Ascending aorta (tissue), 2 donors: ENCODE measurements at regions of chr16 and their contacts with region 1.

Region 1: GRCh38 chr16:28924732-28925385 is at the start of gene RABEP2:
- DNase-seq: peak; percentile 45 to 94
- H3K4me3 ChIP-seq: peak within 1 kb of the TSS; percentile 80 to 90
- H3K27ac ChIP-seq: peak within 1 kb of the TSS; percentile 96 to 99
- H3K4me1 ChIP-seq: peaks cover 6 to 9% of the 10 kb centered on the region in 2 donors
- H3K27me3 ChIP-seq: no peaks in the 10 kb centered on the region
- CTCF ChIP-seq: no peak
- total RNA-seq, gene RABEP2: 64.5 TPM

Region 2: DNA sequence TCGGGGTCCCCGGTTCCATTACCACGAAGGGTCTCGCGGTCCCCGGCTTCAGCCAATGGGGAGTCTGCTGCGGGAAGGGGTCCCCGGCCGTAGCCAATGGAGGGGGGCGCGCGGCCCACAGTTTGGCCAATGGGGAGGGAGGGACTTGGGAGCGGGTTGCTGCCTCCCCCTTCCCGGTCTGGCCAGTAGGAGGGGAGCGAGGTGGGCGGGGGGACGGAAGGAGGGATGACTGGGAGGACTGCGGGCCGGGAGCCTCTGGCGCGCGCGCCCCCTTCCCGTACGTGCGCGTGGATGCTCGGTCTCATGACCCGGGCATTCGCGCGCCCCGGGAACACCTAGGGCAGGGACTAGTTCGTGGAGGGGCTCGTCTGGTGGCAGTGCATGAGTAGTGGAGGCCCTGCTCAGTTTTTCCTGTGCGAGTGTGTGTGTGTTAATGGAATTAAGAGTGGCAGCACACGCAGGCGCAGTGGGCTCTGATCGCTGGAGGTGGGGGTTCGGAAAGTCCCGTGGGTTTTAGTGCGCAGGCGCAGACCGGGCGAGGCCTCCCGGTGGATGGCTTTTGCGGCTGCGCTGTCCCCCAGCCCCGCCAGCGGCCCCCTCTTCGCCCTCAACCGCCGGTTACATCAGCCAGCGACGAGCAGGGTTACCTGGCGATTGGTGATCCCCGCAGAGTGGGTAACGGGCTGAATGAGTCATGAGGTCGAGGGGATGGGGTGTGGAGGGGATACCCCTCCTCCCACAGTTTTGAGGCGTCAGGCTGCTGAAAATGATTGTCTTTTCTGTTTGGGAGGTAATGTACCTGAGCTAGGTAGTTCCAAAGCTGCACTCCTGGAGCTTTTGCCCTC is 100.8 kb before region 1 on chr16:
- intact Hi-C with region 1: loop called (anchors 2 kb)
- DNase-seq: peak; percentile 88 to 98
- H3K4me3 ChIP-seq: peak overlapping the region; percentile 98 to 100
- H3K27ac ChIP-seq: peak overlapping the region; percentile 99 to 100
- H3K4me1 ChIP-seq: peaks cover 0 to 20% of the 10 kb centered on the region in 2 donors
- H3K27me3 ChIP-seq: no peaks in the 10 kb centered on the region
- CTCF ChIP-seq: peak in 1 of 3 experiments; percentile 18

Region 3: GRCh38 chr16:28879841-28880588 is 44.8 kb before region 1 on chr16:
- intact Hi-C with region 1: loop called (anchors 2 kb)
- DNase-seq: peak; percentile 52 to 91
- H3K4me3 ChIP-seq: peak overlapping the region; percentile 51 to 79
- H3K27ac ChIP-seq: no peak overlapping the region
- H3K4me1 ChIP-seq: peaks cover 9 to 10% of the 10 kb centered on the region in 2 donors
- H3K27me3 ChIP-seq: no peaks in the 10 kb centered on the region
- CTCF ChIP-seq: no peak

Region 4: DNA sequence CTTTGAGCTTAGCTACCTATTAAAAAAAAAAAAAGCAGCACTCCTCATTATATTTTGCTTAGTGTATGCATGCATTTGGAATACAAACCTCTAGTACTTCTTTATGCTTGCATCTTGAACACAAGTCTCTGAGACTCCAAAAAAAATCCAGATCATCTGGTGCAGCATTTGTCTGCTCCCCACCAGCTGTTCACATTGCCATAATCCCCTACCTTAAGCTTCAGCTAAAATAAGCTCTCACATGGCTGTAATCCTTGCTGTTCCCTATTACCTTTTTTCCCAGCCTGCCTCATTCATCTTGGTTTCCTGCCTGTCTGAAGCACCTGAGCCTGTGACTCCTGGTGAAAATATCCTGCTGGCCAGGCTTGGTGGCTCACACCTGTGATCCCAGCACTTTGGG is 18.4 kb after region 1 on chr16:
- intact Hi-C with region 1: loop called (anchors 1 kb)
- DNase-seq: no peak
- H3K4me3 ChIP-seq: no peak overlapping the region
- H3K27ac ChIP-seq: no peak overlapping the region
- H3K4me1 ChIP-seq: peaks cover 0 to 4% of the 10 kb centered on the region in 2 donors
- H3K27me3 ChIP-seq: no peaks in the 10 kb centered on the region
- CTCF ChIP-seq: no peak

Region 5: GRCh38 chr16:29023279-29024277 is 98.7 kb after region 1 on chr16:
- intact Hi-C with region 1: no loop called
- DNase-seq: no peak
- H3K4me3 ChIP-seq: no peak overlapping the region
- H3K27ac ChIP-seq: no peak overlapping the region
- H3K4me1 ChIP-seq: no peaks in the 10 kb centered on the region
- H3K27me3 ChIP-seq: no peaks in the 10 kb centered on the region
- CTCF ChIP-seq: no peak